Activated naive CD4-positive, alpha-beta T cell treated with anti-CD3 and anti-CD28 coated beads for 36 hours (primary cell): ENCODE measurements at regions of chr7 and their contacts with region 1.

Region 1: GRCh38 chr7:19146699-19147098 is 1.5 kb upstream of the FERD3L start:
- DNase-seq: no peak
- H3K4me3 Mint-ChIP-seq: no peak overlapping the region
- H3K27ac Mint-ChIP-seq: no peak overlapping the region
- H3K4me1 Mint-ChIP-seq: no peaks in the 10 kb centered on the region
- H3K27me3 Mint-ChIP-seq: peaks cover 35% of the 10 kb centered on the region

Region 2: GRCh38 chr7:17490001-17490400 is 1656.7 kb before region 1 on chr7:
- CTCF ChIA-PET with region 1: no interaction called
- intact Hi-C with region 1: no loop called
- DNase-seq: no peak
- H3K4me3 Mint-ChIP-seq: no peak overlapping the region
- H3K27ac Mint-ChIP-seq: no peak overlapping the region
- H3K4me1 Mint-ChIP-seq: peaks cover 28% of the 10 kb centered on the region
- H3K27me3 Mint-ChIP-seq: no peaks in the 10 kb centered on the region

Region 3: DNA sequence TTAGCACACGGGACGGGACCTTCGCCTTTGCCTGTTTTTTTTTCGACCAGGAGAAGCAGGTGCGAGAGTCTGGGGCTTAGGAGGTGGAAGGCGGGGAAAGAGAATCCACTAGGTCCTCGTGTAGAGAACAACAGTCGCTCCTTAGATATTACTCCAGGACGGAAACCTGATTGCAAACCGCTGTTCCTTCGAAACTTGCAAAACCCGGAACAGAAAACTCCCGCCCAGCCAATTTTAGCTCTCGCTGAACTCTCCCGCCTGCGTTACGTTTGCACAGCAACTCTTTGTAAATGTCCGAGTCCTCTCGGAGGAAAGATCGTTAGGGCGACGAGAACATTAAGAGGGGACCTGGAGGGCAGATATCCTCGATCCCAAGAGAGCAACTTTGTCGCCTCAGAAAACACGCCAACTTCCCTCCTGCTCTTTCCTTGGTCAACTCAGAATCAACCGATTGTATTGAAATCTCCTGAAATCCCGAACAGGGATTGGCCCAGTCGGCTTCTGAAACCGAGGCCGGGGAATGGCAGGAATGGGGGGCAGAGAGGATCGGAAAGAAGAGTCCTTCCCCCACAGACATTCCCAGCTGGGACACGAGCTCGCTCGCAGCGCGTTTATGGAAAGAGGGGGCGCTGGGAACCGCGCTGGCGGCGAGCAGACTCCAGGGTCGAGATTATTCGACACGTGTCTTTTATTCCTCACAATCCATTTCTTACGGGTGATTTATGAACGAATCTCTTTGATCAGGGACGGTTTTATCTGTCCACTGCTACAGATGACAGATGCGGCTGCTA is 39.1 kb before region 1 on chr7:
- CTCF ChIA-PET with region 1: no interaction called
- intact Hi-C with region 1: loop called (anchors 5 kb)
- DNase-seq: no peak
- H3K4me3 Mint-ChIP-seq: no peak overlapping the region
- H3K27ac Mint-ChIP-seq: no peak overlapping the region
- H3K4me1 Mint-ChIP-seq: peaks cover 3% of the 10 kb centered on the region
- H3K27me3 Mint-ChIP-seq: peaks cover 87% of the 10 kb centered on the region

Region 4: DNA sequence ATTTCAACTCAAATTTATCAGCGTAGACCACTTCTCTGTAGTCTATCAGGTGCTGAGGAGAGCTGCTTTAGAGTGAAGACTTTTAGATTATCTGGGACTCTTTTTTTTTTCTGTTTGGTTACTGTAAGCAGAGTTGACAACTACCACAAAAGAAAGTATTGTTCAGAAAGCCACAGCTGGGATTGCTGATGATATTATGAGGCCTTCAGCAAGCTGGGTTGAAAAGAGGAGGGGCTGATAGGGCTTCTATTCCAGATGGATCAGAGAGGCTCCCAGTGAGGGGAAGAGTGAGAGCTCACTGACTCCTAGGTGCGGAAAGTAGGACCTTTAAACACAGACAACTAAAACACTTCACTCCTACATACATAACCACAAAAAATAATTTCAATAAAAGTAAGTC is 187.0 kb after region 1 on chr7:
- CTCF ChIA-PET with region 1: no interaction called
- intact Hi-C with region 1: no loop called
- DNase-seq: no peak
- H3K4me3 Mint-ChIP-seq: no peak overlapping the region
- H3K27ac Mint-ChIP-seq: no peak overlapping the region
- H3K4me1 Mint-ChIP-seq: no peaks in the 10 kb centered on the region
- H3K27me3 Mint-ChIP-seq: no peaks in the 10 kb centered on the region